ENCODE measurements at regions of chr15 and their contacts with region 1.

Region 1: DNA sequence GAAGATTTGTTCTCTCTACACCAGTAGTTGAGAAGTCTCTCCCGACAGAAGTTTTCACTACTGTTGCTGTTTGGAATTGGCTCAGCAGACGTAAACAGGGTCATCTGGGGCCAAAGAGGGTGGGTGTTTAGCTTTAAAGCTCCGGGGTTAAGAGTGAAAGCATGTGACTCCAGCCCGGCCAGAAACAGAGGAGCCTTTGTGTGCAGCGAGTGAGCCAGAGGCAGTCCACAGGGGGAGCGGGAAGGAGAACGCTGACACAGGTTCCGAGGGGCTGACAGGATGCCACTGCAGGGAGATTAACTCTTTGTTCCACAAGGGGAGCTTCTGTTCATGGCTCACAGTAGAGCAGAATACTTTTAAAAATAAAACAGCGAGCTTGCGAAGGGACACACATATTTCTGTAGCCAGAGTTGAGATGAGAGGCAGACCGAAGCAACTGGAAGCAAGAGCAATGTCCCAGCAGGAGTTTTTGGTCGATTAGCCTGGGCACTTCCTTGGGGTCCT is 26.9 kb downstream of the BMF start:
- DNase-seq: peak in 2 of 3 donors; percentile 40 to 41
- H3K4me3 ChIP-seq: peak overlapping the region; percentile 45 to 86 (median 77)
- H3K4me3 Mint-ChIP-seq: peak overlapping the region; percentile 86 to 87
- H3K27ac ChIP-seq: peak overlapping the region; percentile 32 to 87
- H3K27ac Mint-ChIP-seq: peak overlapping the region; percentile 70 to 96 (median 83)
- H3K4me1 ChIP-seq: peaks cover 22 to 31% of the 10 kb centered on the region in 2 donors
- H3K4me1 Mint-ChIP-seq: peaks cover 33% of the 10 kb centered on the region
- H3K27me3 ChIP-seq: no peaks in the 10 kb centered on the region
- H3K27me3 Mint-ChIP-seq: peaks cover 3 to 4% (median 4%) of the 10 kb centered on the region in 3 donors
- CTCF ChIP-seq: no peak

Region 2: DNA sequence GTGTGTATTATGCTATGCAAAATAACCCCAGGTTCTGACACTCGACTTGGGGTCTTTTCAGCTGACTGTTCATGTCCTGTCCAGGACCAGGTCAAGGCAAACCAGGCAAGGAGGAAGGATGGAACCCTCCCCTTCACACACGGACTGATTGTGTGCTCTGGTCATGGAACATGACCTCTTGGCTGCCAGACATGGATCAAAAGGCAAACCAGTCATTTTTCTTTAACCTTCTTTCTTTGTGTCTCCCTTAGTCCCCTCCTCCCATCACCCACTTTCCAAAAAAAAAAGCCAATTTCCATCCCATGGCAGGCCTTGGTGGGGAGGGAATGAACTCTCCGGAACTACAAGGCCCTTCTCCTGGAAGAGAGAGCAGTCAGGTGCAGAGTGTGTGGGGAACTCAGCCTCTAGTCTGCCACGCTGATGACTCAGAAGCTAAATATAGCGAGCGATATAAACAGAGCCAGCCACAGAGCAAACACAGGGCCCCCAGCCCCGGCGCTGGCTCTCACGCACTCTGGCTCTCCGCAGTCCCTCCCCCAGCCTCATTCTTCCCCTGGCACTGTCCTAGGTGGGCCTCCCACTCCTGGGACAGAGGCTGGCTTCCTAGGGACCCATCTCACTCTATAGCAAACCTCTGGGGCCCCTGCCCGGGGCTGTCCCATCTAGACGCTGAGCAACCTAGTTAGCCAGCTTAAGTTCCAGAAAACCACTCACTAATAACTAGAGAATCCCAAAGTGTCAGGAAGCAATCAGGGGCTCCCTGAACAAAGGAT is 16.9 kb after region 1 on chr15:
- intact Hi-C with region 1: loop called in 1 of 2 experiments (anchors 2 kb)
- DNase-seq: peak; percentile 87 to 98 (median 91)
- H3K4me3 ChIP-seq: peak overlapping the region in 1 of 3 experiments; percentile 50
- H3K4me3 Mint-ChIP-seq: peak overlapping the region; percentile 75 to 78
- H3K27ac ChIP-seq: peak overlapping the region; percentile 75 to 96
- H3K27ac Mint-ChIP-seq: peak overlapping the region; percentile 91 to 97 (median 93)
- H3K4me1 ChIP-seq: peaks cover 82 to 96% of the 10 kb centered on the region in 2 donors
- H3K4me1 Mint-ChIP-seq: peaks cover 89% of the 10 kb centered on the region
- H3K27me3 ChIP-seq: no peaks in the 10 kb centered on the region
- H3K27me3 Mint-ChIP-seq: peaks cover 1 to 2% (median 2%) of the 10 kb centered on the region in 3 donors
- CTCF ChIP-seq: no peak

Measured in CD14-positive monocyte (primary cell).